Activated CD4-positive, alpha-beta memory T cell treated with anti-CD3 and anti-CD28 coated beads, Interleukin-2, amount 10 ng/mL, durations not matched to agents 7 days and 5 days (primary cell): ENCODE measurements at regions of chr1 and their contacts with region 1.

Region 1: GRCh38 chr1:27872059-27872801 is at the start of gene THEMIS2:
- DNase-seq: peak; percentile 80
- H3K4me3 Mint-ChIP-seq: peak within 1 kb of the TSS; percentile 95
- H3K27ac Mint-ChIP-seq: peak within 1 kb of the TSS; percentile 82
- H3K4me1 Mint-ChIP-seq: peaks cover 58% of the 10 kb centered on the region
- H3K27me3 Mint-ChIP-seq: no peaks in the 10 kb centered on the region
- total RNA-seq, gene THEMIS2: 58.9 to 60.1 TPM

Region 2: DNA sequence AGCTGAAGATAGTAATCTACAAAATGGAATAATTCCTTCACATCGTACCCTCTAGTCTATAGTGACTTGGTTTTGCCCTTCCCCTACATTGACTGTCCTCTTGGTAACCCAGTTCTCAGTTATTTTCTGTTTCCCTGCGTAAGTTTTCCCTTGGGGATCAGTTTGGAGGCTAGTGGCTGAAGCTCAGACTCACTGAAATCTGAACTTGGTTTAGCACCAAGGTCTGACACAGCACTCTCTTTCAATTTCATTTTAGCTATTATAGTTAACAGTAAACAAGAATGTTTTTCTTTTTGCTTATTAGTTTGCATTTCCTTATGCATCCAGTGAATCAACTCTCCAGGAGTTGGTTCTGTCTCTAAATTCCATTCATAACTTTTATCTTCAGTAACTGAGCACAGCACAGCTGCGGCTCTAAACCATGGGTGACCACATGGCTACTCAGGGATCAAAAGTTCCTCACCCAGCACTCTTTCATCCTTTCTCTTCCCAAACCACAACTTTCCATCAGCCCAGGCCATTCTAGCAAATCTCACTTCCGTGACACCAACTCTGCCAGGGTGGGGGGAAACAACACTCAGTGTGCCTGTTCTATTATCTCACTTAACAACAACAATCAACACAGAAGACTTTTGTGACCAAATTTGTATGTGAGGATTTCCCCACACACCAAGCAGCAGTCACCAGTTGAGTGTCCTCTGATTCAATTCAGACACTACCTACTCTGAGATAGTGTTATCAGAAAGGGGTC is 182.6 kb before region 1 on chr1:
- CTCF ChIA-PET with region 1: no interaction called
- POLR2A ChIA-PET with region 1: no interaction called
- DNase-seq: no peak
- H3K4me3 Mint-ChIP-seq: no peak overlapping the region
- H3K27ac Mint-ChIP-seq: no peak overlapping the region
- H3K4me1 Mint-ChIP-seq: peaks cover 18% of the 10 kb centered on the region
- H3K27me3 Mint-ChIP-seq: peaks cover 4% of the 10 kb centered on the region

Region 3: DNA sequence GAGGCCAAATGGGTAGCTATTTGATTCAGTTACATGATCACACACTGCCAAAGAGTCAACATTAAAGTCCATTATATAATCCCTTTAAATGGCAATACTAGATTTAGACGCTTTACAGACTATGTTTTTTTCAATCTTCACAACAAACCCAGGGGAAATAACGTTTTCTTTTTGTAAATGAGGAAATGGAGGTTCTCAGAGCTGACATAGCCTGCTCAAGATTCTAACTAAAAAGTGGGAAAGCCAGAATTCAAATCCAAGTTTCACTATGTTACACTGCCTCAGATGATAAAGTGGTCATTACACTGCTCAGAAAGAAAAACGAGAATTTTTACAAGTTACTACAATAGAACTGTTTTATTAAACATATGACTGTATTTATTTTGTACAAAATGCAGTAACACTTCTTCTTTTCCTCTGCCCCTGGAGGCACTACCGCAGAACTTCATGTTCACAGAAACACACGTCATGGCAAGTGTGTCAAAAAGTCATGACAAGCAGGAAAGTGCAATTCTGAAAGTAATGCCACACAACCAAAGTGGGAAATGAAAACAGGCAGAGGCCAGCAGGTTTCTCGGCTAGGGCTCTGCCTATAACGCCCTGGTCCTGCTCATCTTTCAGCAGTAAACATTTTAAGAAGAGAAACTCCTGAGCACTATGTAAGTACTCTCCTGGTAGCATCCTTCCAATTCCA is 19.1 kb after region 1 on chr1:
- CTCF ChIA-PET with region 1: no interaction called
- POLR2A ChIA-PET with region 1: interaction called, 22 read pairs
- DNase-seq: peak; percentile 65
- H3K4me3 Mint-ChIP-seq: peak overlapping the region; percentile 25
- H3K27ac Mint-ChIP-seq: peak overlapping the region; percentile 95
- H3K4me1 Mint-ChIP-seq: peaks cover 70% of the 10 kb centered on the region
- H3K27me3 Mint-ChIP-seq: no peaks in the 10 kb centered on the region

Region 4: DNA sequence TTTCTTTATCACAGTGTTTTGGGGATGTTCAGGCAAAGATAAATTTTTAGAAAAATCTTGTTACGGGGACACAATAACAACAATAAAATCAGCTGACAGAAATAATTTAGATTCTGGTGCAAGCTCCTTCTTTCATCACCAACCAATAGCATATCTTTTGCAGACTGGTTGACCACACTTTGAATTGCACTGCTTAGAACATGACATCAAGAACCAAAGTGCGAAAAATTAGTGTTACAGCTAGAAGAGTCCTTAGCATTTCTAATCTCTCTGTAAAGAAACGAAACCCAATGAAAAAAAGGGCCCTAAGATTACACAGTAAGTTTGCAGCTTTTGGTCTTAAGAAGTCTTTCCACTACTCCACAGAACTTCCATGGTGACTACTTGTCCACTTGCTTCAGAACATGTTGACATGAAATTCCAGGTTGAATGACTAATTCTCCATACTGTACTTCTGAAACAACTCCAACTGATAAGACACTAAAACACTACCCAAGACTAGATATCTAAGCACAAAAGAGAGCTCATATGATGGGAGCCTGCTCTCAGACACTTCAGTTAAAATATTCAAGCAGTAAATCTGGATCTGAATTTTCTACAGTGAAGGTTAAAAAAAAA is 118.8 kb after region 1 on chr1:
- CTCF ChIA-PET with region 1: no interaction called
- POLR2A ChIA-PET with region 1: no interaction called
- DNase-seq: no peak
- H3K4me3 Mint-ChIP-seq: no peak overlapping the region
- H3K27ac Mint-ChIP-seq: no peak overlapping the region
- H3K4me1 Mint-ChIP-seq: peaks cover 44% of the 10 kb centered on the region
- H3K27me3 Mint-ChIP-seq: no peaks in the 10 kb centered on the region